SK-MEL-5 (cell line): ENCODE measurements at regions of chr17 and their contacts with region 1.

Region 1: GRCh38 chr17:80426681-80427326 is 11.8 kb downstream of the ENDOV start:
- DNase-seq: peak; percentile 86

Region 2: DNA sequence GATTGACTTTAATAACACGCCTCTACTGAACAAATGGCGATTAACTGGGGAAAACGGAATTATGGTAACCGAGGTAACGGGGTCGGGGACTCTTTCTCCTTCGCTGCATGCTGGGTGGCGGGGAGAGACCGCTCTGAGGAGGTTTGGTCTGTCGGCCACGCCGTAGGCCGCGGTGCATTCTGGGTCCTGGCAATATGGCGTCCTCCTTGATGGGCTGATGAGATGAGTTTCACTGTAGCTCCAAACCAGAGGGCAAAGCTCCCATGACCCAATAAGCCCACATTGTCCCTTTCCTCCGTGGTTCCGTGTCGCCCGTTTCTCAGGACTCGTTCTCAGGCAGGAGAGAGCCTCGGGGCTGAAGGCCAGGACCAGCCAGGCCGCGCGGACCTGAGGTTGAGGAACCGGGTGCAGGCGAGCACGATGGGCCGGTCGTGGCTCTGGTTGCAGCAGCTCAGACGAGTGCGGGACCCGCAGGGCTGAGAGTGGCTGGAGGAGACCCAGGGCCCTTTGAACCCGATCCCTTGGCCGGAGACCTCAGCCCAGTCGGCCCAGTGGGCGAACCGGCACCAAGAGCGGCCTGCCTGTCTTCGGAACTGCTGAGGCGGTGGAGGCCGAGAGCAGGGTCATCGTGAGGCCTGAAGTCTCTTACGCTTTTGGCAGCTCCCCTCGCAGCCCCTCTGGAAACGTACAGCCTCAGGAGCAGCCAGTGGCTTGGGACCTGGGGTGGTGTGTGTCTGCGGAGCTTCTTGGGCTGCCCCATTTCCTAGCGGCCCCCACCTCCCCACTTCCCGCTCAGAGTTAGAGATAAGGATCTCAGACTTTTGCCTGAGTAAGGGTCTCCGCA is 118.1 kb after region 1 on chr17 and contains the start of gene RPTOR:
- in situ Hi-C with region 1: loop called (anchors 25 kb)
- DNase-seq: peak; percentile 98
- total RNA-seq, gene RPTOR: 27.3 and 28.6 TPM in 2 replicates

Region 3: DNA sequence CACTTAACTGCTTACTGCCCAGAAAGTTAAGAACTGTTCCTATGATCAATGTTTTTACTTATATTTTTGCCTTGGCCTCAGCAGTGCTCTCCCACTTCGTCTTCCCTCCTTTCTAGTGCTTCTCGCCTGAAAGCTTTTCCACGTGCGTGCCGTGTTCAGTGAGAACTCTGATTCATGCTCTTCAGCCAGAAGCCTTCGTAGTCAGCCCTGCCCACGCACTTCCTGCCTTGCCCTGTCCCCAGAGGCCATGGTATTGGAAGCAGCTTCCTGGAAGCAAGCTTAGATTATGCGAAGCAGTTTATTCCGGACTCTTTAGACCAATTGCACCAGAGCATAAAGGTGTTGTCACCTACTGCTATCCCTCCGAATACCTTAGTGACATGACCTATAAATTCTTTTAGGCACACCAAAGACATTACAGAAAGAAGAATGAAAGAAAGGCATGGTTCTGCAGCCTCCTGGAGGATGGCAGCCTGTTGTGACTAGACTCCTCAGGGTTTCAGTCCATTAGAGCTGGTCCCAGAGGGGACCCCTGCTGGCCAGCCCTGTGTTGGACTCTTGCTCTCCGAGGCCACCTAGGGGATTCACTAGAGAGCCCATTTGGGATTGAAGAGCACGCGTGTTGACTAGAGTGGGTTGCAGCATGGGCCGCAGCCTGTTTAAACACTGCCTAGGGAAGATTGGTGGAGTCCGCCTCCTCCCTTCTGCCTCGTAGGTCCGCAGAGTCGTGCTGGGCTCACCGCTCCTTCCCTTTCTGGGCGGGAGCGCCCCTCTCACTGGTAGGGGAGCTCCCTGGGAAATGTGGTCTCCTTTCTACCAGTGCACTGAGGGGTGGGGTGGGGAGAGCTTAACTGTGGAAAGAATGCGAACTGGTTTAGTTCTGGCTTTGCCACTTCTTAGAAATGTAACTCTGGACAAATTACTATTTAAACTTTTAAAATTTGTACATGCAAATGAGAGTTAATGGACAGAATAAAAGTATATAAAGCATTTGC is 223.2 kb after region 1 on chr17:
- in situ Hi-C with region 1: loop called (anchors 25 kb)
- DNase-seq: peak; percentile 98